HEK293 (cell line): ENCODE measurements at regions of chr2 and their contacts with region 1.

Region 1: DNA sequence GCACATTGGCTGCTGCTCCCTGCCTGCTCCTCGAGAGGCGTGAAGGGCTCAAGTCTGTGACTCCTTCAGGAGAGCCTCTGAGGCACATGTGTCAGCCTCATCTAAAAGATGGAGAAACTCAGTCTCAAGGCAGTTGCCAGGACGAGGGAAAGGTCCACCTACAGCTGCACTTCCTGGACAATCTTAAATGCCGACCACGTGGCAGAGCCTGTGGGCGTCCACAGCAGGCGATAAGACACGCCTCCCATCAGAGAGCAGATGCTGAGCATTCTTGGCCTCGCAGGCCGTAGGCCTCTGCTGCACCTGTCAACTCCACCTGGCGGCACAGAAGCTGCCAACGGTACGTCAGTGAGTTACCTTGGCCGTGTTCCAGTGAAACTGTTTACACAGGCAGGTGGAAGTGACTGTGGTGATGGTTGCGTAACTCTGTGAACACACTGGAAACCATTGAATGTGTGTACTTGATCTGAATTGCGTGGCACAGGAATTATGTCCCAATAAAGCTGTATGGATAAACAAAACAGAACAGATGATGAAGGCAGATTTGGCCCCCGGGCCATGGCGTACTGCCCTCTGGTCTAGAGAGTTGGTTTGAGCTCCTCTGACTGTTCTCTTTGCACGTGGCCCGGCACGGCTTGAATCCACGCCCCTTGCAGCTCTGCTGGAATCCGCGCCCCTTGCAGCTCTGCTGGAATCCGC is 114.5 kb downstream of the RNF144A start:
- H3K4me3 ChIP-seq: no peak overlapping the region
- H3K27ac ChIP-seq: no peak overlapping the region
- H3K4me1 ChIP-seq: no peaks in the 10 kb centered on the region; the same call in 1 of the 2 replicates
- CTCF ChIP-seq: no peak

Region 2: DNA sequence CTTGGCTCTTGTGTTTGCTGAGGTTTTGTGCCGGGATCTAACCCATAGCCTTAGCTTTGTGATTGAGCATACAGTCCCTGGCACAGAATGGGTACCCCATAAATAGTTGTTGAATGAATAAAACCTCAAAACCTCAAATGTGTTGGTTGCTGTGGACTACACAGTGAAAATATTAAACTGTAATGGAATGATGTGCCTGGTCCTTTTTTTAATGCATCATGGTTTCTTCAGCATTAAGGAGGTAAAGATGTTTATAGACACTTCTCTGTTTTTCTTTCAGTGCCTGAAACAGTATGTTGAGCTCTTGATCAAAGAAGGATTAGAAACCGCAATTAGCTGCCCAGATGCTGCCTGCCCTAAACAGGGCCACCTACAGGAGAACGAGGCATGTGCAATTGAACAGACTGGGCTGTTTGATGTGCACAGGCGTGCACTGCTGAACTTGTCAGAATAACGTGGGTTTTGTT is 17.5 kb before region 1 on chr2:
- CTCF ChIA-PET with region 1: interaction called, 10 read pairs
- POLR2A ChIA-PET with region 1: no interaction called
- H3K4me3 ChIP-seq: no peak overlapping the region
- H3K27ac ChIP-seq: no peak overlapping the region
- H3K4me1 ChIP-seq: 0 out of 2 replicates have a peak, but pooled peaks cover 5% of the 10 kb centered on the region
- CTCF ChIP-seq: 0 out of 2 replicates have a peak, but pooled peaks have one; percentile 13